Caco-2 (cell line): ENCODE measurements at regions of chr2 and their contacts with region 1.

Region 1: GRCh38 chr2:112726497-112727190 is 5.8 kb downstream of the NT5DC4 start:
- DNase-seq: peak; percentile 93 to 95
- H3K4me3 ChIP-seq: peak overlapping the region; percentile 0; the same call in 1 of the 2 replicates
- H3K4me3 Mint-ChIP-seq: peak overlapping the region; percentile 58
- H3K27ac Mint-ChIP-seq: peak overlapping the region; percentile 67
- H3K4me1 ChIP-seq: peaks cover 21% of the 10 kb centered on the region
- H3K4me1 Mint-ChIP-seq: peaks cover 10% of the 10 kb centered on the region
- H3K27me3 ChIP-seq: no peaks in the 10 kb centered on the region
- H3K27me3 Mint-ChIP-seq: no peaks in the 10 kb centered on the region
- CTCF ChIP-seq: peak; percentile 96 to 97

Region 2: DNA sequence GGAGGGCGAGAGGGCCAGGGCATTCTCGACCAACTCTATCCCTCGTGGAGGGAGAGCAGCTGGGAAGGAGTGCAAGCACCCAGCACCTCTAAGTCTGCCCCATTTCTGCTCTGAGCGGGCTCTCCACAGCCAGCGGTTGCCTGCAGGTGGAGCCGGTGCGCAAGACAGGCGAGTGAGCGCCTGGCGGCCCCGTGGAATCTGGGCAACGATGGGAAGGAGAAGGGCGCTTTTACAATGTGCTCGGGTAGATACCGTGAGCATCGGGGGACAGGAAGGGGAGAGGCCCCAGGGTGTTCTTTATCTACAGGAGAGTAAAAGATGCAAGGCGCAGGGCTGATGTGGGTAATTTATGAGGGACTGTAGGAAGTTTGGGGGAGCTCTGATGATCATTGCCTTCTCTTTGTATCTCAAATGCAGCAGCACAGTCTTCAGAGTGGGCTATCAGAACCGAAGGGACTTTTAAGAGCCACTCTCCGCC is 245.6 kb before region 1 on chr2:
- CTCF ChIA-PET with region 1: no interaction called
- POLR2A ChIA-PET with region 1: no interaction called
- intact Hi-C with region 1: loop called (anchors 5 kb)
- DNase-seq: peak; percentile 85 to 89
- H3K4me3 ChIP-seq: peak overlapping the region; percentile 55
- H3K4me3 Mint-ChIP-seq: peak overlapping the region; percentile 89
- H3K27ac Mint-ChIP-seq: peak overlapping the region; percentile 40
- H3K4me1 ChIP-seq: peaks cover 5% of the 10 kb centered on the region; the same call in 1 of the 2 replicates
- H3K4me1 Mint-ChIP-seq: peaks cover 11% of the 10 kb centered on the region
- H3K27me3 ChIP-seq: no peaks in the 10 kb centered on the region
- H3K27me3 Mint-ChIP-seq: no peaks in the 10 kb centered on the region
- CTCF ChIP-seq: peak; percentile 60 to 94

Region 3: GRCh38 chr2:112584134-112584890 is 142.3 kb before region 1 on chr2 and contains the start of gene CHCHD5:
- CTCF ChIA-PET with region 1: interaction called, 8 read pairs
- POLR2A ChIA-PET with region 1: interaction called, 3 read pairs
- intact Hi-C with region 1: loop called (anchors 1 kb)
- DNase-seq: peak; percentile 95 to 96
- H3K4me3 ChIP-seq: peak within 1 kb of the TSS; percentile 67
- H3K4me3 Mint-ChIP-seq: peak within 1 kb of the TSS; percentile 80
- H3K27ac Mint-ChIP-seq: peak within 1 kb of the TSS; percentile 97
- H3K4me1 ChIP-seq: peaks cover 13% of the 10 kb centered on the region
- H3K4me1 Mint-ChIP-seq: peaks cover 8% of the 10 kb centered on the region
- H3K27me3 ChIP-seq: no peaks in the 10 kb centered on the region
- H3K27me3 Mint-ChIP-seq: no peaks in the 10 kb centered on the region
- CTCF ChIP-seq: no peak
- total RNA-seq, gene CHCHD5: 50.7 and 56.0 TPM in 2 replicates

Region 4: GRCh38 chr2:112601751-112602150 is 124.9 kb before region 1 on chr2:
- CTCF ChIA-PET with region 1: interaction called, 5 read pairs
- POLR2A ChIA-PET with region 1: no interaction called
- intact Hi-C with region 1: loop called (anchors 1 kb)
- DNase-seq: peak in 1 of 2 experiments; percentile 12
- H3K4me3 ChIP-seq: no peak overlapping the region
- H3K4me3 Mint-ChIP-seq: no peak overlapping the region
- H3K27ac Mint-ChIP-seq: no peak overlapping the region
- H3K4me1 ChIP-seq: peaks cover 7% of the 10 kb centered on the region
- H3K4me1 Mint-ChIP-seq: peaks cover 14% of the 10 kb centered on the region
- H3K27me3 ChIP-seq: no peaks in the 10 kb centered on the region
- H3K27me3 Mint-ChIP-seq: no peaks in the 10 kb centered on the region
- CTCF ChIP-seq: no peak

Region 5: DNA sequence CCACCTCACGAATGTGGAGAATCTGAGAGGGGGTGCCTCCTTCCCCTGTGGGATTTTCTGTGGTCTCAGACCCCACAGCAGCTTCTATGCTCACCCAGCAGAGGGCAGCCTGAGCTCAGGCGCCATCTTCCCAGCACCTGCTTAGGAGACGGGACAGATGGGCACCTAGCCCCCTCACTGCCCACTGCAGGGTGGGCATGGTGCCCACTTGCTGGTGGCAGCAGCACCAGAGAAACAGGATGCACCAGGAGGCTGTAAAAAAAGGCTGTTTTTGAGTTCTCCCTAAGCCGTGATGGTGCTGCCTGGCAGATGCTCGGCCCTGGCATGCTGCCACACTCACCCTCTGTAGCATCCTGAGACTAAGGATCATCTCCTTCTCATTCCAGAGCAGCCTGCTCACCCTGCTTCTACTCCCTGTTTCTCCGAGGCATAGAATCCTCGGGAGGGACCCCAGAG is 100.0 kb before region 1 on chr2:
- CTCF ChIA-PET with region 1: interaction called, 62 read pairs
- POLR2A ChIA-PET with region 1: interaction called, 3 read pairs
- intact Hi-C with region 1: loop called (anchors 1 kb)
- DNase-seq: peak; percentile 65 to 67
- H3K4me3 ChIP-seq: no peak overlapping the region
- H3K4me3 Mint-ChIP-seq: no peak overlapping the region
- H3K27ac Mint-ChIP-seq: no peak overlapping the region
- H3K4me1 ChIP-seq: peaks cover 15% of the 10 kb centered on the region
- H3K4me1 Mint-ChIP-seq: peaks cover 8% of the 10 kb centered on the region
- H3K27me3 ChIP-seq: no peaks in the 10 kb centered on the region
- H3K27me3 Mint-ChIP-seq: no peaks in the 10 kb centered on the region
- CTCF ChIP-seq: peak; percentile 66 to 92

Region 6: GRCh38 chr2:112692496-112692911 is 34.1 kb before region 1 on chr2:
- CTCF ChIA-PET with region 1: interaction called, 17 read pairs
- POLR2A ChIA-PET with region 1: interaction called, 3 read pairs
- intact Hi-C with region 1: loop called (anchors 1 kb)
- DNase-seq: peak; percentile 72 to 86
- H3K4me3 ChIP-seq: no peak overlapping the region
- H3K4me3 Mint-ChIP-seq: no peak overlapping the region
- H3K27ac Mint-ChIP-seq: peak overlapping the region; percentile 17
- H3K4me1 ChIP-seq: peaks cover 10% of the 10 kb centered on the region
- H3K4me1 Mint-ChIP-seq: peaks cover 16% of the 10 kb centered on the region
- H3K27me3 ChIP-seq: no peaks in the 10 kb centered on the region
- H3K27me3 Mint-ChIP-seq: no peaks in the 10 kb centered on the region
- CTCF ChIP-seq: no peak

Region 7: GRCh38 chr2:112821142-112821541 is 94.5 kb after region 1 on chr2:
- CTCF ChIA-PET with region 1: no interaction called
- POLR2A ChIA-PET with region 1: no interaction called
- intact Hi-C with region 1: no loop called
- DNase-seq: no peak
- H3K4me3 ChIP-seq: no peak overlapping the region
- H3K4me3 Mint-ChIP-seq: no peak overlapping the region
- H3K27ac Mint-ChIP-seq: no peak overlapping the region
- H3K4me1 ChIP-seq: 0 out of 2 replicates have a peak, but pooled peaks cover 5% of the 10 kb centered on the region
- H3K4me1 Mint-ChIP-seq: no peaks in the 10 kb centered on the region
- H3K27me3 ChIP-seq: no peaks in the 10 kb centered on the region
- H3K27me3 Mint-ChIP-seq: no peaks in the 10 kb centered on the region
- CTCF ChIP-seq: no peak